ENCODE measurements at regions of chr5 and their contacts with region 1.

Region 1: GRCh38 chr5:59548807-59549357 is 344.6 kb downstream of the PDE4D start:
- DNase-seq: peak; percentile 72
- H3K4me3 Mint-ChIP-seq: no peak overlapping the region
- H3K27ac Mint-ChIP-seq: peak overlapping the region; percentile 92
- H3K4me1 Mint-ChIP-seq: peaks cover 33% of the 10 kb centered on the region
- H3K27me3 Mint-ChIP-seq: no peaks in the 10 kb centered on the region
- CTCF ChIP-seq: no peak

Region 2: DNA sequence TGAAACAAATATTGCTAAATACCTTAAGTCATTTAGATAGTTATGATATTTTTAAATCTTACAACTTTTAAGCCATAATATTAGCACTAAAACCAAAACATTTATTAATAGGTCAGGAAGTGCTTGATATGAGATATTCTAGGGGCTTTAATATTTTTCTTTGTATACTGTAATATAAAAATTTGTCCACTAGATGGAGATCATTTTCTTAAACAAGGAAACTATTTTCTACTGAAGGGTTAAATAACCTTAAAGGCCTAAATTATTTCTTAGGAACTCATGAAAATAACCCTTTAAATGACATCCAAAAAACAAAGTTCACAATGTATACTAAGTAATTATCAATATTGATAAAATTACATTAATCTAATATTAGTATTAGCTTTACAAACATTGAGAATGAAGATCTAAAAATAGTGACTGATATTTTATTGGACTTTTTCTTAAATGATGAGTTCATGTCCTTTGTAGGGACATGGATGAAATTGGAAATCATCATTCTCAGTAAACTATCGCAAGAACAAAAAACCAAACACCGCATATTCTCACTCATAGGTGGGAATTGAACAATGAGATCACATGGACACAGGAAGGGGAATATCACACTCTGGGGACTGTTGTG is 330.3 kb before region 1 on chr5:
- CTCF ChIA-PET with region 1: no interaction called
- POLR2A ChIA-PET with region 1: no interaction called
- intact Hi-C with region 1: no loop called
- DNase-seq: peak; percentile 11
- H3K4me3 Mint-ChIP-seq: no peak overlapping the region
- H3K27ac Mint-ChIP-seq: no peak overlapping the region
- H3K4me1 Mint-ChIP-seq: peaks cover 22% of the 10 kb centered on the region
- H3K27me3 Mint-ChIP-seq: no peaks in the 10 kb centered on the region
- CTCF ChIP-seq: peak; percentile 39

Region 3: DNA sequence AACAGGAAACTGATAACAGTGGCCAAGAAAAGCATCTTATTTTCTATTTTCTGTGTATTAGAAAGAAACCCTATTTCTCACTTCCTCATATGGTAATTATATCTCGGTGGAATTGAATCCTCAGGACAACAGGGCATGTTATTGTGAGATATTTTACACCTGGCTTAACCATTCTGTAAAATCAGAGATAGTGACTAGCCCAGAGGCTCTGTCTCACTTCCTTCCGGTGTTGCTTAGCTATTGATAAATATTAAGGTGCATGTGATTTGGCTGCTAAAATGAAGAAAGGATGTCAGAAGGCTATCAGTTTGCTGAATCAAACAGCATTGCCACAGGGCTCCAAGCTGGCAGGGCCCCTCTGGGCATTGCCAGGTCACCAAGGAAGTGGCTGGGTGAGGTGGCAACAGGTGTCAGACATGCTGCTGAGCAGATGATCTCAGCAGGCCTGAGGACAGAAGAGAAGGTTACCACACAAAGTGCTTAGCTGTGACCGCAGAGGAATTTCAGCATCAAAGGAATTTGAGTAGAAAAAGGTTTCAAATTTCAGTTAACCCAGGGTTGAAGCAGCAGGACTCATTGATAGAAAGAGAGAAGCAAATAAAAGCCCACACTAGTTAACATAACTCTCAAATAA is 14.0 kb after region 1 on chr5:
- CTCF ChIA-PET with region 1: interaction called, 3 read pairs
- POLR2A ChIA-PET with region 1: interaction called, 16 read pairs
- intact Hi-C with region 1: no loop called
- DNase-seq: peak; percentile 54
- H3K4me3 Mint-ChIP-seq: no peak overlapping the region
- H3K27ac Mint-ChIP-seq: peak overlapping the region; percentile 32
- H3K4me1 Mint-ChIP-seq: peaks cover 32% of the 10 kb centered on the region
- H3K27me3 Mint-ChIP-seq: no peaks in the 10 kb centered on the region
- CTCF ChIP-seq: no peak

Region 4: GRCh38 chr5:59591162-59591561 is 42.3 kb after region 1 on chr5:
- CTCF ChIA-PET with region 1: interaction called, 4 read pairs
- POLR2A ChIA-PET with region 1: interaction called, 15 read pairs
- intact Hi-C with region 1: no loop called
- DNase-seq: no peak
- H3K4me3 Mint-ChIP-seq: no peak overlapping the region
- H3K27ac Mint-ChIP-seq: peak overlapping the region; percentile 88
- H3K4me1 Mint-ChIP-seq: peaks cover 6% of the 10 kb centered on the region
- H3K27me3 Mint-ChIP-seq: no peaks in the 10 kb centered on the region
- CTCF ChIP-seq: no peak

Measured in MCF 10A (cell line).